GM12878 (cell line): ENCODE measurements at regions of chr15 and their contacts with region 1.

Region 1: GRCh38 chr15:69160141-69160993 is at the start of gene GLCE:
- DNase-seq: peak; percentile 86
- ATAC-seq: peak; percentile 96
- H3K4me3 ChIP-seq: peak within 1 kb of the TSS; percentile 93
- H3K27ac ChIP-seq: no peak within 1 kb of the TSS; the same call in 1 of the 2 replicates
- H3K4me1 ChIP-seq: 0 out of 2 replicates have a peak, but pooled peaks cover 4% of the 10 kb centered on the region
- H3K27me3 ChIP-seq: peaks cover 0 to 5% of the 10 kb centered on the region in 2 experiments; a peak in 2 of 4 replicates
- CTCF ChIP-seq: no peak
- EP300 ChIP-seq: no peak
- POLR2A ChIP-seq: peak; percentile 91
- RAD21 ChIP-seq: no peak
- polyA plus RNA-seq, gene GLCE: 2.2 to 3.0 TPM

Region 2: GRCh38 chr15:69104050-69104750 is 56.2 kb before region 1 on chr15:
- CTCF ChIA-PET with region 1: no interaction called
- POLR2A ChIA-PET with region 1: no interaction called
- RAD21 ChIA-PET with region 1: interaction called, 3 read pairs
- SMC1A ChIA-PET with region 1: interaction called, 4 read pairs
- in situ Hi-C with region 1: no loop called
- intact Hi-C with region 1: loop called (anchors 2 kb)
- DNase-seq: peak; percentile 73
- ATAC-seq: peak; percentile 89
- H3K4me3 ChIP-seq: no peak overlapping the region
- H3K27ac ChIP-seq: peak overlapping the region; percentile 38; the same call in 1 of the 2 replicates
- H3K4me1 ChIP-seq: peaks cover 3% of the 10 kb centered on the region; the same call in 1 of the 2 replicates
- H3K27me3 ChIP-seq: no peaks in the 10 kb centered on the region
- CTCF ChIP-seq: no peak
- EP300 ChIP-seq: peak; percentile 45 to 61; a peak in 2 of 4 replicates
- POLR2A ChIP-seq: no peak
- RAD21 ChIP-seq: no peak

Region 3: DNA sequence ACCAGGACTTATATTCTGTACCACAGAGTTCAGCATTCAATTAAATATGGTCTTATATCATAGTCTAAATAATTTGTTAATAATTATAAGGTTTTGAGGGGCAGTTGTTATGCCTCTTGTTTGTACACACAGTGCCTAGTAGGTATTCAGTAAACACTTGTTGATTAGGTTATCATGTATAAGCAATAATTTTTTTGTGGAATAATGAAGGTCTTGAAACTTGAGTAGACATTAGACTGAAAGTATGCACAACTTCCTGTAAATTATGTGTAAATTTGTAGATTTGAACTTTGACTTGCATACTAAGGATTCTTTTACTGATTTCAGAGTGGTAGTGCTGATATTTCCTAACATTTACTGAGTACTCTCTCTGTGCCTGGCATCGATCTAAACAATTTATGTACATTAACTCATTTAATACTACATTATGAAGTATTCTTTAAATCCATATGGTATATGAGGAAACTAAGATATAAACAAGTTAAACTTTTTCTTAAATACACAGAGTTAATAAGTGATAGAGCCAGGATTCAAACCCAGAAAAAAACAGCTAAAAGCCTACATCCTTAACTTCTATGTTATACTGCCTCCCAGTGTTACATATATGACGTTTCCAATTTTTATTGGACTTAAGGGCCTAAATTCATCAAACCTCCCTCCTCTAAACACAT is 65.1 kb after region 1 on chr15:
- CTCF ChIA-PET with region 1: interaction called, 4 read pairs
- POLR2A ChIA-PET with region 1: no interaction called
- RAD21 ChIA-PET with region 1: interaction called, 5 read pairs
- SMC1A ChIA-PET with region 1: interaction called, 19 read pairs
- in situ Hi-C with region 1: no loop called
- intact Hi-C with region 1: no loop called
- DNase-seq: no peak
- ATAC-seq: no peak
- H3K4me3 ChIP-seq: no peak overlapping the region
- H3K27ac ChIP-seq: no peak overlapping the region
- H3K4me1 ChIP-seq: no peaks in the 10 kb centered on the region
- H3K27me3 ChIP-seq: no peaks in the 10 kb centered on the region
- CTCF ChIP-seq: peak; percentile 10 to 44 (median 17); a peak in 2 of 6 replicates
- EP300 ChIP-seq: no peak
- POLR2A ChIP-seq: no peak
- RAD21 ChIP-seq: no peak; the same call in 1 of the 2 replicates

Region 4: GRCh38 chr15:69323966-69324365 is 163.6 kb after region 1 on chr15:
- CTCF ChIA-PET with region 1: no interaction called
- POLR2A ChIA-PET with region 1: no interaction called
- RAD21 ChIA-PET with region 1: no interaction called
- SMC1A ChIA-PET with region 1: no interaction called
- in situ Hi-C with region 1: no loop called
- intact Hi-C with region 1: no loop called
- DNase-seq: no peak
- ATAC-seq: no peak
- H3K4me3 ChIP-seq: no peak overlapping the region
- H3K27ac ChIP-seq: no peak overlapping the region
- H3K4me1 ChIP-seq: no peaks in the 10 kb centered on the region
- H3K27me3 ChIP-seq: peaks cover 0 to 5% of the 10 kb centered on the region in 2 experiments; a peak in 2 of 4 replicates
- CTCF ChIP-seq: no peak
- EP300 ChIP-seq: no peak
- POLR2A ChIP-seq: no peak
- RAD21 ChIP-seq: no peak